ENCODE measurements at regions of chr12 and their contacts with region 1.

Region 1: DNA sequence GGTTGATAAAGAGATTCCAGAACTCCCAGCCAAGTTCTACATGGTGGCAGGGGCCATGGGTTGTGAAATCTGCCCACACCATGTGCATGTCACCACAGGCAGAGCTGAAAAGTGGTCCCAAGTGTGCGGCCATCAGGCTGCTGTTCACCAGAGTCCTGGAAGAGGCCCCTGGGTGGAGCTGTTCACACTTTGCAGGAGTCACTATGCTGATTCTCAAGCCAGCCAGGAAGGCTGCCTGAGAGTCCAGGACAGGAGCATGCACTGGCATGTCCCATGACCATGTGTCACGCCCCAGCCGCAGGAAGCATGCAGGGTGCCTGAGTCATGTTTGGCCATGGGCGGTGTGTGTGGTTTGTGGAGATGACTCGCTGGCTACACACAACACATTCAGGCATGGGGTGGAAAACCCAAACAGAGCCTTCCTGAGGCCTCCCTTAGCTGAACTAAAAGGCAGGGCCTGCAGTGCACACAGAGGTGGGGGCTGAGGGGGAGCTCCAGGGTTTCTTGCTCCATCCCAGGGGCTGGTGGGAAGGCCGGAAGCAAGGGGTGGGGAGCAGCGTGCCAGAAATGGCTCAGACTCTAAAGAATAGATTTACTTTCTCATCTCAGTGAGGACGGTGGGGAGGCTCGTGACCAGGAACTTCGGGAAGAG is 19.4 kb downstream of the ABCB9 start:
- DNase-seq: peak; percentile 87 to 91
- H3K4me3 ChIP-seq: no peak overlapping the region
- H3K27ac ChIP-seq: peak overlapping the region; percentile 58
- H3K4me1 ChIP-seq: peaks cover 62% of the 10 kb centered on the region
- H3K27me3 ChIP-seq: no peaks in the 10 kb centered on the region
- CTCF ChIP-seq: no peak; the same call in 1 of the 2 replicates

Region 2: GRCh38 chr12:122799641-122800243 is 147.1 kb before region 1 on chr12:
- CTCF ChIA-PET with region 1: interaction called, 12 read pairs
- POLR2A ChIA-PET with region 1: no interaction called
- intact Hi-C with region 1: no loop called
- DNase-seq: no peak
- H3K4me3 ChIP-seq: no peak overlapping the region
- H3K27ac ChIP-seq: no peak overlapping the region
- H3K4me1 ChIP-seq: no peaks in the 10 kb centered on the region
- H3K27me3 ChIP-seq: no peaks in the 10 kb centered on the region
- CTCF ChIP-seq: no peak

Region 3: GRCh38 chr12:122888232-122888867 is 58.5 kb before region 1 on chr12:
- CTCF ChIA-PET with region 1: interaction called, 3 read pairs
- POLR2A ChIA-PET with region 1: interaction called, 3 read pairs
- intact Hi-C with region 1: loop called (anchors 1 kb)
- DNase-seq: peak; percentile 86 to 98
- H3K4me3 ChIP-seq: peak overlapping the region; percentile 48; the same call in 1 of the 2 replicates
- H3K27ac ChIP-seq: peak overlapping the region; percentile 97
- H3K4me1 ChIP-seq: peaks cover 86% of the 10 kb centered on the region
- H3K27me3 ChIP-seq: no peaks in the 10 kb centered on the region
- CTCF ChIP-seq: no peak

Region 4: DNA sequence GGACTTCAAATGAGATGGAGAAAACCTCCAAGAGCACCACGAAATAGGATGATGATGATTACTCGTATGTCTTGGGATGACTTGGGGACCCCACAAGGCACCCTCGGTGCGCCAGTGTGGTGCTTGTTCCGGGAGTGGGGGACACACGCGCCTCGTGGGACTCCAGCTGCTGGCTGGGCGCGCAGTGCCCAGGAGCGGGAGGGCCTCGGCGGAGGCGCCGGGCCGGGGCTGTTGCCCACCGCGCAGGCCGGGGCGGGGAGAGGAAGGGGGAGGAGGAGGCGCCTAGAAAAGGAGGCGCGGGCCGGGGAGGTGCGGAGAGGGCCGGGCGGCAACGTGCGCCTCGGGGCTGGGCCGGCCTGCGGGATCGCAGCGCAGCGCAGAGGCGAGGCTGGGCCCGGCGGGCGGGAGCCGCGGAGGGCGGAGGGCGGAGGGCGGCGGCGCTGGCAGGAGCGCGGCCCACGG is 1348.0 kb after region 1 on chr12 and contains the start of gene RFLNA:
- CTCF ChIA-PET with region 1: no interaction called
- POLR2A ChIA-PET with region 1: no interaction called
- intact Hi-C with region 1: no loop called
- DNase-seq: no peak
- H3K4me3 ChIP-seq: no peak within 1 kb of the TSS
- H3K27ac ChIP-seq: no peak within 1 kb of the TSS
- H3K4me1 ChIP-seq: no peaks in the 10 kb centered on the region
- H3K27me3 ChIP-seq: peaks cover 62% of the 10 kb centered on the region
- CTCF ChIP-seq: no peak
- total RNA-seq, gene RFLNA: not detected in 2 replicates